B cell (primary cell): ENCODE measurements at regions of chr3 and their contacts with region 1.

Region 1: GRCh38 chr3:107676469-107677309 is 153.9 kb downstream of the BBX start:
- DNase-seq: peak; percentile 38
- ATAC-seq: no peak
- H3K4me3 ChIP-seq: no peak overlapping the region
- H3K4me3 Mint-ChIP-seq: peak overlapping the region; percentile 20
- H3K27ac ChIP-seq: peak overlapping the region; percentile 18 to 77
- H3K27ac Mint-ChIP-seq: peak overlapping the region; percentile 56
- H3K4me1 ChIP-seq: peaks cover 23 to 30% of the 10 kb centered on the region in 2 donors
- H3K4me1 Mint-ChIP-seq: peaks cover 54% of the 10 kb centered on the region
- H3K27me3 ChIP-seq: no peaks in the 10 kb centered on the region
- H3K27me3 Mint-ChIP-seq: no peaks in the 10 kb centered on the region
- CTCF ChIP-seq: peak; percentile 76

Region 2: DNA sequence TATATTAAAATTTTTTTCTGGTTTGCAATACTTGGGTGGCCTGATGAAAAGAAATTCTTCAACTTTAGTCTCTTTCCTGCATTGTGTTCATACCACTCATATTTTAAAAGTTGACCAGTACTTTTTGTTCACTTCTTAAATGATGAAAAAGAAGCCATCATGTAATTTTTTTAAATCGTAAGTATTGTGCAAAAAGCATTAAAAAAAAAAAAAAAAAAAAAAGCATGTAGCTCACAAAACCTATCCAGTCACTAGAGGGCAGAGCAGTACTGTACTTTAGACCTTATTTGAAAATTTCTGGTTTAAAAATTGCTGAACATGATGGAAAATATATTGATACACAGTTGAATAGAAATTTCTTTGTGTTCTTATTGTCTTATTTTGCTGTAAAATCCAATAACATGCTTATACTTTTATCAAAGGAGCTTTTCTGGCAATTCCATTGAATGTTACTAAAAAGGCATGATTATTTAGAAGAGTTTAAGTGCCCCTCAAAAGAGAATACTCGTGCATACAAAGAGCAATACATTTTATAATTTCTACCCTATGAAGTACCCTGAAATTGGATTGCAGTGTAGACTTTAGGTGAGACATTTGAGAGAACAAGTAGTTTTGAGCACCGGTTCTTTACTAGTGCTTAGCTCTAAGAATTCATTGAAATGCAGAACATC is 16.2 kb before region 1 on chr3:
- CTCF ChIA-PET with region 1: interaction called, 113 read pairs
- POLR2A ChIA-PET with region 1: interaction called, 5 read pairs
- intact Hi-C with region 1: no loop called
- DNase-seq: peak; percentile 51
- ATAC-seq: no peak
- H3K4me3 ChIP-seq: no peak overlapping the region
- H3K4me3 Mint-ChIP-seq: no peak overlapping the region
- H3K27ac ChIP-seq: no peak overlapping the region
- H3K27ac Mint-ChIP-seq: no peak overlapping the region
- H3K4me1 ChIP-seq: peaks cover 8% of the 10 kb centered on the region in 2 donors
- H3K4me1 Mint-ChIP-seq: peaks cover 25% of the 10 kb centered on the region
- H3K27me3 ChIP-seq: no peaks in the 10 kb centered on the region
- H3K27me3 Mint-ChIP-seq: no peaks in the 10 kb centered on the region
- CTCF ChIP-seq: peak; percentile 83

Region 3: DNA sequence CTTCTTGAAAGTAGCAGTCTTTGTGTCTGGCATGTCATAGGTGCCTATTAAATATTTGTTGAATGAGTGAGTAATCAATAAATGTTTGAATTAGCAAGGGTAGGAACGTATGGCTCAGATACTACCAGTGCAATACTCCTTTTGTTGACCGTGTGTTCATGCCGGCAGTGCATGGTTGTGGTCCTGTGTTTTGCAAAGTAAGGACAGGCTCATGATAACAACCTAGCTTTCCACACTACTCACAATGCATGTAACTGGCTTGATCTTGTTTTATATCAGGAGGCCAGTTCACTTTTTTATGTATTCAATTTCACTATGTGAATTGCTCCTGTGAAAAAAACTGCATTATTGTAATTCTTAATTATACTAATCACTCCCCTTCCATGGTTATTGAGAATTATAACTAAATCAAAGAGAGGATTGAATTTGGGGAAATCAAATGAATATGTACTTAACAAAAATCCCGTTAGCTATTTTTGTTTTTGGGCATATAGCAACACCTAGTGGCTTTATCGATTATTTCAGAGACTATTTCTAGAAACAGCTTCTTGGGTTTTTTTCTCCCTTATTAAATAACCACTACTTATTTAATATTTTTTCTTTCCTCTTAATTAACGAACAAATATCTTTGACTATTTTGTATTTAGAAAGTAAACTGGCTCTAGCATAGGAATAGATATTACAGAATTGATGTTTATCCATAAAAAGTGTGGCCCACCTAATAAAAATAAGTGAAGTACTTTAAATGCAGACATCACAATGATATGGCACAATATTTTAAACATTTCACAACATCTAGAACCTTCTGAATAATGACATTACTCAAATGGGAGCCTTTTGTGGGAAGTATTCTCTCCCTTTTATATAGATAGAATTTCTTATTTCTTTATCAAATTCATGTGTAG is 64.6 kb after region 1 on chr3:
- CTCF ChIA-PET with region 1: interaction called, 73 read pairs
- POLR2A ChIA-PET with region 1: no interaction called
- intact Hi-C with region 1: loop called (anchors 1 kb)
- DNase-seq: peak; percentile 43
- ATAC-seq: no peak
- H3K4me3 ChIP-seq: no peak overlapping the region
- H3K4me3 Mint-ChIP-seq: no peak overlapping the region
- H3K27ac ChIP-seq: no peak overlapping the region
- H3K27ac Mint-ChIP-seq: no peak overlapping the region
- H3K4me1 ChIP-seq: peaks cover 18 to 21% of the 10 kb centered on the region in 2 donors
- H3K4me1 Mint-ChIP-seq: peaks cover 36% of the 10 kb centered on the region
- H3K27me3 ChIP-seq: no peaks in the 10 kb centered on the region
- H3K27me3 Mint-ChIP-seq: no peaks in the 10 kb centered on the region
- CTCF ChIP-seq: peak; percentile 76

Region 4: DNA sequence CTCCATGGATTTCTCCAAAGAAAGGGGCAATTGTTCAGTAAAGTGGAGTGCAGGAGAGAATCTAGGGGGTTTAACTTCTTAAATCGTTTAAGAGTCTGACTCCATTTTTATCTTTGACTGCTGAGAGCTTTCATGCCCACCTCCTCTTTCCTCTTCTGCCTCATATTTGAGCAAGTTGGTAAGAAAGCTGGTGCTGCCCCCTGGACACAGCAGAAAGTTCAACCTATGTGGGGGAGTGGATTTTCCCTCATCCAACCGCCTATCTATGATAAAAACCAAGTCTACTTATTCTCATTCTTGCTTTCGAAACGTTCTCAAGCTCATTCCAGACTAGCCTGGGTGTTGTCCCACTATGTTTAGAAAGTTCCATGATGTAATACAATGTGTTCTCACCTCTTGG is 645.7 kb after region 1 on chr3:
- CTCF ChIA-PET with region 1: interaction called, 3 read pairs
- POLR2A ChIA-PET with region 1: no interaction called
- intact Hi-C with region 1: loop called (anchors 5 kb)
- DNase-seq: peak; percentile 55
- ATAC-seq: peak; percentile 73
- H3K4me3 ChIP-seq: no peak overlapping the region
- H3K4me3 Mint-ChIP-seq: no peak overlapping the region
- H3K27ac ChIP-seq: no peak overlapping the region
- H3K27ac Mint-ChIP-seq: no peak overlapping the region
- H3K4me1 ChIP-seq: no peaks in the 10 kb centered on the region
- H3K4me1 Mint-ChIP-seq: peaks cover 12% of the 10 kb centered on the region
- H3K27me3 ChIP-seq: no peaks in the 10 kb centered on the region
- H3K27me3 Mint-ChIP-seq: no peaks in the 10 kb centered on the region
- CTCF ChIP-seq: peak; percentile 52

Region 5: GRCh38 chr3:108552267-108553159 is 875.8 kb after region 1 on chr3:
- CTCF ChIA-PET with region 1: interaction called, 12 read pairs
- POLR2A ChIA-PET with region 1: no interaction called
- intact Hi-C with region 1: loop called (anchors 10 kb)
- DNase-seq: peak; percentile 70
- ATAC-seq: peak; percentile 51
- H3K4me3 ChIP-seq: no peak overlapping the region
- H3K4me3 Mint-ChIP-seq: no peak overlapping the region
- H3K27ac ChIP-seq: peak overlapping the region in 1 of 2 donors; percentile 65
- H3K27ac Mint-ChIP-seq: peak overlapping the region; percentile 18
- H3K4me1 ChIP-seq: peaks cover 0 to 8% of the 10 kb centered on the region in 2 donors
- H3K4me1 Mint-ChIP-seq: peaks cover 7% of the 10 kb centered on the region
- H3K27me3 ChIP-seq: no peaks in the 10 kb centered on the region
- H3K27me3 Mint-ChIP-seq: no peaks in the 10 kb centered on the region
- CTCF ChIP-seq: peak; percentile 75